Activated CD4-positive, alpha-beta T cell treated with anti-CD3 and anti-CD28 coated beads for 36 hours (primary cell): ENCODE measurements at regions of chr2 and their contacts with region 1.

Region 1: DNA sequence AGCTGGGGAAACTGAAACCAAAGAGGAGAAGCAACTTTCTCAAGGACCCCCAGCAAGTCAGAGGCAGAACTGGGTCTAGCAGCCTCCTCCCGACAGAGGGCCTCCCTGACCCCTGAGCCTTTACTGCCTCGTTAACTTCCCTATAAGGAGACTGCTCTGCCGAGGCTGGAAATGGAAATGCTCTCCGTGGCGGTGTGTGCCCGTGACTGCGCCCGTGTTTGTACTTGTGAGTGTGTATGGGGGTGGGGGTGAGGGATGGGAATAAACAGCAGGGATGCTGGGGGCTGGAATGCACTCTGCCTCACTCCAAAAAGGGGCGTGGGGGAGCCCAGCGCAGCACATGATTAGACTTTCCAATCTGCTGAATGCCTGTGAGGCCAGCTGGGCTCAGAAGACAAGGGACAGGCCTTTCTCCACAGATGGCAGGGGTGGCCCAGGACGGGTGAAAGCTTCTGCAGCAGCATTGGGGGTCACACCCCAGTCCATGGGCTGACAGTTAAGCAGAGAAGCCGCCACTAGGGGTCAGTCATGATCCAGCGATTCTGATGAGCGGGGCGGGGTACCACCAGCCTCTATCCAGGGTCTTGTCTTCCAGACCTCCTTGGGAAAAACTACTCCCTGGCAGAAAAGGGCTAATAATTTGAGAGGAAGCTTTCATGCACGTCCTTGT is 26.8 kb downstream of the MPHOSPH10 start:
- DNase-seq: peak; percentile 80
- ATAC-seq: peak; percentile 78
- H3K4me3 Mint-ChIP-seq: no peak overlapping the region
- H3K27ac Mint-ChIP-seq: no peak overlapping the region
- H3K4me1 Mint-ChIP-seq: peaks cover 4% of the 10 kb centered on the region
- H3K27me3 Mint-ChIP-seq: peaks cover 3% of the 10 kb centered on the region

Region 2: GRCh38 chr2:71018625-71019024 is 138.6 kb before region 1 on chr2:
- CTCF ChIA-PET with region 1: no interaction called
- POLR2A ChIA-PET with region 1: no interaction called
- intact Hi-C with region 1: loop called in 1 of 2 experiments (anchors 5 kb)
- DNase-seq: no peak
- ATAC-seq: peak; percentile 47
- H3K4me3 Mint-ChIP-seq: no peak overlapping the region
- H3K27ac Mint-ChIP-seq: no peak overlapping the region
- H3K4me1 Mint-ChIP-seq: peaks cover 7% of the 10 kb centered on the region
- H3K27me3 Mint-ChIP-seq: peaks cover 2% of the 10 kb centered on the region

Region 3: GRCh38 chr2:71049365-71050360 is 107.6 kb before region 1 on chr2:
- CTCF ChIA-PET with region 1: no interaction called
- POLR2A ChIA-PET with region 1: no interaction called
- intact Hi-C with region 1: loop called (anchors 1 to 5 kb)
- DNase-seq: peak; percentile 82
- ATAC-seq: peak; percentile 81
- H3K4me3 Mint-ChIP-seq: no peak overlapping the region
- H3K27ac Mint-ChIP-seq: peak overlapping the region; percentile 37
- H3K4me1 Mint-ChIP-seq: peaks cover 13% of the 10 kb centered on the region
- H3K27me3 Mint-ChIP-seq: no peaks in the 10 kb centered on the region

Region 4: DNA sequence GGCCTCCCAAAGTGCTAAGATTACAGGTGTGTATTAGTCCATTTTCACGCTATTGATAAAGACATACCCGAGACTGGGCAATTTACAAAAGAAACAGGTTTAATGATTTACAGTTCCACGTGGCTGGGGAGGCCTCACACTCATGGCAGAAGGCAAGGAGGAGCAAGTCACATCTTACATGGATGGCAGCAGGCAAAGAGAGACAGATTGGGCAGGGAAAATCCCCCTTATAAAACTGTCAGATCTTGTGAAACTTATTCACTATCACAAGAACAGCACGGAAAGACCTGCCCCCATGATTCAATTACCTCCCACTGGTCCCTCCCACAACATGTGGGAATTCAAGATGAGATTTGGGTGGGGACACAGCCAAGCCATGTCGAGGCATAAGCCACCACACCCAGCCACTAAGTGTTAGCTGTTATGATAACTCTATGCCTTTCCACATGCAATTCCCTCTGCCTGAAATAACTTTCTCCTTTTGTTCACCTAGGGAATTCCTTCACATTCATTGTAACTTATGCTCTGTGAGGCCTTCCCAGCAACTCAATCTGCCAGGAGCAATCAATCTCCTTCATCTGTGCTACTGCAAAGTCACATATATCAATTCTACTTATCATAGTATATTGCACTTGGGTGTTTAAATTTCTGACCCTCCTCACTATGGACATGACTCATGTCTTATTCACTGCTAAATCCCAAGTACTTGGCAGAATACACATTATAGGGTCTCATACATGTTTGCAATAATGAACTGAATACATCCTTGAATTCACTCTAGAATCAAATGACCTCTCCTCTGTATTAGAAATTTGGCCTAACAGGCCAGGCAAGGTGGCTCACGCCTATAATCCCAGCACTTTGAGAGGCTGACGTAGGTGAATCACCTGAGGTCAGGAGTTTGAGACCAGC is 34.6 kb before region 1 on chr2:
- CTCF ChIA-PET with region 1: no interaction called
- POLR2A ChIA-PET with region 1: no interaction called
- intact Hi-C with region 1: no loop called
- DNase-seq: no peak
- ATAC-seq: no peak
- H3K4me3 Mint-ChIP-seq: no peak overlapping the region
- H3K27ac Mint-ChIP-seq: no peak overlapping the region
- H3K4me1 Mint-ChIP-seq: peaks cover 7% of the 10 kb centered on the region
- H3K27me3 Mint-ChIP-seq: no peaks in the 10 kb centered on the region

Region 5: DNA sequence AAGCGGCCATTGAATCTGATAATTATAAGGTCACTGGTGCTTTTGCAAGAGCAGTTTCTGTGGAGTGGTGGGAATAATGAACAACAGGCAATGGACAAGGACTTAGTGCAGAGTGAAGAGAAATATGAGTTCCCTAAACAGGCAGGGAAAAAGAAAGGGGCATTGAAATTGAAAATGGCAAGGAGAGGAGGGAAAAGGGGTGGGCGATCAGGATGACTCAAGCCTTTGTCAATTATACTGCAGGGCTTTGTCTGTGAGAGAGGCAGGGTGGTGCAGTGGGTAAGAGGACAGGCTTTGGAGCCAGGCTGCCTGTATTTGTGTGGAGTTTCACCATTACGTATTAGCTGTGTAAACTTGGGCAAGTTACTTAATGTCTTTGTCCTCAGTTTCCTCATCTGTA is 99.2 kb after region 1 on chr2:
- CTCF ChIA-PET with region 1: no interaction called
- POLR2A ChIA-PET with region 1: no interaction called
- intact Hi-C with region 1: no loop called
- DNase-seq: no peak
- ATAC-seq: no peak
- H3K4me3 Mint-ChIP-seq: no peak overlapping the region
- H3K27ac Mint-ChIP-seq: no peak overlapping the region
- H3K4me1 Mint-ChIP-seq: no peaks in the 10 kb centered on the region
- H3K27me3 Mint-ChIP-seq: peaks cover 17% of the 10 kb centered on the region

Region 6: GRCh38 chr2:71276311-71277146 is 119.3 kb after region 1 on chr2:
- CTCF ChIA-PET with region 1: no interaction called
- POLR2A ChIA-PET with region 1: no interaction called
- intact Hi-C with region 1: loop called in 1 of 2 experiments (anchors 5 kb)
- DNase-seq: peak; percentile 94
- ATAC-seq: peak; percentile 100
- H3K4me3 Mint-ChIP-seq: peak overlapping the region; percentile 67
- H3K27ac Mint-ChIP-seq: no peak overlapping the region
- H3K4me1 Mint-ChIP-seq: peaks cover 14% of the 10 kb centered on the region
- H3K27me3 Mint-ChIP-seq: peaks cover 76% of the 10 kb centered on the region

Region 7: GRCh38 chr2:71299507-71299906 is 142.2 kb after region 1 on chr2:
- CTCF ChIA-PET with region 1: no interaction called
- POLR2A ChIA-PET with region 1: interaction called, 3 read pairs
- intact Hi-C with region 1: loop called in 1 of 2 experiments (anchors 5 kb)
- DNase-seq: no peak
- ATAC-seq: no peak
- H3K4me3 Mint-ChIP-seq: no peak overlapping the region
- H3K27ac Mint-ChIP-seq: no peak overlapping the region
- H3K4me1 Mint-ChIP-seq: no peaks in the 10 kb centered on the region
- H3K27me3 Mint-ChIP-seq: no peaks in the 10 kb centered on the region

Region 8: GRCh38 chr2:71510196-71510807 is 353.0 kb after region 1 on chr2:
- CTCF ChIA-PET with region 1: interaction called, 3 read pairs
- POLR2A ChIA-PET with region 1: no interaction called
- intact Hi-C with region 1: loop called (anchors 1 kb)
- DNase-seq: peak; percentile 86
- ATAC-seq: peak; percentile 61
- H3K4me3 Mint-ChIP-seq: no peak overlapping the region
- H3K27ac Mint-ChIP-seq: no peak overlapping the region
- H3K4me1 Mint-ChIP-seq: no peaks in the 10 kb centered on the region
- H3K27me3 Mint-ChIP-seq: peaks cover 4% of the 10 kb centered on the region